ENCODE measurements at regions of chr1 and their contacts with region 1.

Region 1: DNA sequence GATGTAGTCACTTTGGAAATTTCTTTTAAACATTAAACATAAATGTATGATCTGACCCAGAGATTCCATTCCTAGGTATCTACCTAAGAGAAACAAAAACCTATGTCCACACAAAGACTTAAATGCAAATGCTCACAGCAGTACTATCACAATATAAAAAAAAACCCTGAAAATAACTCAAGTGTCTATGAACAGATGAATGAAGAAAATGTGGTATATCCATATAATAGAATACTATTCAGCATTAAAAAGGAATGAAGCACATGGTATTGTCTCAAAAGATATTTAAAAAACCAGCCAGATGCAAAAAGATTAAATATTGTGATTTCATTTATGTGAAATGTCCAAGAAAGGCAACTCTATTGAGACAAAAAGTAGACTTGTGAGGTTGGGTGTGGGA is 48.3 kb downstream of the ADSS2 start:
- DNase-seq: no peak
- ATAC-seq: no peak
- H3K4me3 ChIP-seq: no peak overlapping the region
- H3K4me3 Mint-ChIP-seq: no peak overlapping the region
- H3K27ac ChIP-seq: no peak overlapping the region
- H3K27ac Mint-ChIP-seq: no peak overlapping the region
- H3K4me1 ChIP-seq: no peaks in the 10 kb centered on the region
- H3K4me1 Mint-ChIP-seq: no peaks in the 10 kb centered on the region
- H3K27me3 ChIP-seq: no peaks in the 10 kb centered on the region
- H3K27me3 Mint-ChIP-seq: no peaks in the 10 kb centered on the region
- CTCF ChIP-seq: no peak

Region 2: DNA sequence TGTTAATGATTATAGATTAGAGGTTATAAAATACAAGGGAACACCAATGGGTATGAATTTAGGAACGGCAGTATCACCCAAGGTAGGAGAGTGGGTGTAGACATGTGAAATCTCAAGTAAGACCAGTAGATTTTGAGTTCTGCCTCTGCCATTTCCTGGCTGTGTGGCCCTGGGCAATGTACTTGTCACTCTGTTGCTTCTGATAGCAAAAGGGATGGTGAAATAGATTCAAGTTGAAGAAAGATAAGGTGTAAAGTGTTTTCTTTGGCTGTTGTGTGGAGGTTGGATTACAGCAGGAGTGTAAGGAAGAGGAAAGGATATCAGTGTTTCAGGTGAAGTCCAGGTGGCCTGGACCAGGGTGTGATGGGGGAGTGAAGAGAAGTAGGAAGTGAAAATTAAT is 16.0 kb before region 1 on chr1:
- CTCF ChIA-PET with region 1: no interaction called
- POLR2A ChIA-PET with region 1: no interaction called
- intact Hi-C with region 1: loop called in 1 of 2 experiments (anchors 2 kb)
- DNase-seq: peak in 1 of 9 experiments; percentile 1
- ATAC-seq: no peak
- H3K4me3 ChIP-seq: no peak overlapping the region
- H3K4me3 Mint-ChIP-seq: no peak overlapping the region
- H3K27ac ChIP-seq: no peak overlapping the region
- H3K27ac Mint-ChIP-seq: no peak overlapping the region
- H3K4me1 ChIP-seq: no peaks in the 10 kb centered on the region
- H3K4me1 Mint-ChIP-seq: no peaks in the 10 kb centered on the region
- H3K27me3 ChIP-seq: no peaks in the 10 kb centered on the region
- H3K27me3 Mint-ChIP-seq: no peaks in the 10 kb centered on the region
- CTCF ChIP-seq: no peak

Region 3: DNA sequence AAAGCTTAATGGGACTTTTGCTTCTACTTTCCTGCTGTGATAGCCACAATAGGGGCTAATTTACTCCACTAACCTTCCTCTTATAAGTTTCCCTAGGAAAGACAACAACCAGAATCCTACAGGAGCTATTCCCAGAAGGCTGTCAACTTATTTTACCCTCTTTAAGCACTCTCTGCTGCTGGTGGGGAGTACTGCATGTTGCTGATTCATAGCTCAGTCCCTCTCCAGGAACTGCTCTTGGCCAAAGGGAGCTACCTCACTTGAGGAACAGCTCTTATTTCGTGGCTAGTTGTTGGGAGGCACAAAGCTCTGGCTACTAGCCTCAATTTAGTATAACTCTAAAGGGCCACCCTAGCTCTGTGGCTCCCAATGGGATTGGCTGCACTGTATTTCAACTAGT is 11.1 kb after region 1 on chr1:
- CTCF ChIA-PET with region 1: no interaction called
- POLR2A ChIA-PET with region 1: no interaction called
- intact Hi-C with region 1: loop called in 1 of 2 experiments (anchors 2 kb)
- DNase-seq: no peak
- ATAC-seq: no peak
- H3K4me3 ChIP-seq: no peak overlapping the region
- H3K4me3 Mint-ChIP-seq: no peak overlapping the region
- H3K27ac ChIP-seq: no peak overlapping the region
- H3K27ac Mint-ChIP-seq: no peak overlapping the region
- H3K4me1 ChIP-seq: no peaks in the 10 kb centered on the region
- H3K4me1 Mint-ChIP-seq: peaks cover 3% of the 10 kb centered on the region
- H3K27me3 ChIP-seq: no peaks in the 10 kb centered on the region
- H3K27me3 Mint-ChIP-seq: no peaks in the 10 kb centered on the region
- CTCF ChIP-seq: no peak

Measured in CD8-positive, alpha-beta T cell (primary cell).